Activated CD4-positive, alpha-beta T cell treated with anti-CD3 and anti-CD28 coated beads, Interleukin-2, amount 10 ng/mL, durations not matched to agents 24 days and 14 days (primary cell): ENCODE measurements at regions of chr7 and their contacts with region 1.

Region 1: DNA sequence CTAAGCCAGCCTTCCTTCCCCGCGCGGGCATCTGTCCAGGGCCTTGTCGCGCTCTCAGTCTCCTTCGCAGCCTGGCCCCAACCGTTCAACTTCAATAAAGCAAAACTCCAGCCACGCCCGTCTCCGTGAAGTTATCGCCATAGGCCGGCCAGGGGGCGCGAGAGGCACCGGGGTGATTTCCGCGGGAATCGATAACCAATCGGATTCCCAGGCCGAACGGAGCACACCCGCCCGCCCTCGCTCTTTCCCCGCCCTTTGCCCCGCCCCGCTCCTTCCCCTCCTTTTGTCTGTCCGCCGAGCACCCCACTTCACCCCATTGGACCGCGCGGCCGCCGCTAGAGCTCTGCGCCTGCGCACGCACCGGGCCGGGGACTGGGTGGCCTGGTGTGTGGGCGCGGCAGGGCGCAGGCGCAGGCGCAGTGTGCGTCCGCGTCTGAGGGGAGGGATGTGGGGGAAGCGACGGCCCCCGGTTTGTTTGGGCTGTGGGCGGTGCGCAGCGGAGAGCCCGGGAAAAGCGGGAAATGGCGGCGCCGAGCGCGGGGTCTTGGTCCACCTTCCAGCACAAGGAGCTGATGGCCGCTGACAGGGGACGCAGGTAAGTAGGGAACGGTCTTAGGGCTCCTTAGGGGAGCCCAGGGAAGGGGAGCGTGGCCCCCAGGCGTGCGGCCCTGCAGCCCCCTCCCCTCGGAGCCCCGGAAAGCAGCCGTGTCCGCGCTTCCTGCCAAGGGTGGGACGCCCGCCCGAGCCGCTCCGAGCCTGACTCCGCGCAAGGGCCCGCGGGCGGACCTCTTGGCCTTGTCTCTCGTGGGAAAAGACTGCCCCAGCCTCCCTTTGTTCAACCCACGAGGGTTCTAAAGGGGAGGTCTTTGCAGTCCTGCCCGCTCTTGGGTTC is at the start of gene CASP2:
- DNase-seq: peak; percentile 100
- H3K4me3 Mint-ChIP-seq: peak within 1 kb of the TSS; percentile 97
- H3K27ac Mint-ChIP-seq: peak within 1 kb of the TSS; percentile 95
- H3K4me1 Mint-ChIP-seq: peaks cover 54% of the 10 kb centered on the region
- H3K27me3 Mint-ChIP-seq: no peaks in the 10 kb centered on the region
- total RNA-seq, gene CASP2: 99.1 and 110 TPM in 2 replicates

Region 2: GRCh38 chr7:142587578-142588191 is 700.5 kb before region 1 on chr7:
- intact Hi-C with region 1: no loop called
- DNase-seq: peak; percentile 70
- H3K4me3 Mint-ChIP-seq: no peak overlapping the region
- H3K27ac Mint-ChIP-seq: no peak overlapping the region
- H3K4me1 Mint-ChIP-seq: peaks cover 14% of the 10 kb centered on the region
- H3K27me3 Mint-ChIP-seq: no peaks in the 10 kb centered on the region

Region 3: GRCh38 chr7:143205560-143206293 is 82.5 kb before region 1 on chr7:
- intact Hi-C with region 1: no loop called
- DNase-seq: peak; percentile 58
- H3K4me3 Mint-ChIP-seq: no peak overlapping the region
- H3K27ac Mint-ChIP-seq: no peak overlapping the region
- H3K4me1 Mint-ChIP-seq: peaks cover 8% of the 10 kb centered on the region
- H3K27me3 Mint-ChIP-seq: peaks cover 18% of the 10 kb centered on the region

Region 4: DNA sequence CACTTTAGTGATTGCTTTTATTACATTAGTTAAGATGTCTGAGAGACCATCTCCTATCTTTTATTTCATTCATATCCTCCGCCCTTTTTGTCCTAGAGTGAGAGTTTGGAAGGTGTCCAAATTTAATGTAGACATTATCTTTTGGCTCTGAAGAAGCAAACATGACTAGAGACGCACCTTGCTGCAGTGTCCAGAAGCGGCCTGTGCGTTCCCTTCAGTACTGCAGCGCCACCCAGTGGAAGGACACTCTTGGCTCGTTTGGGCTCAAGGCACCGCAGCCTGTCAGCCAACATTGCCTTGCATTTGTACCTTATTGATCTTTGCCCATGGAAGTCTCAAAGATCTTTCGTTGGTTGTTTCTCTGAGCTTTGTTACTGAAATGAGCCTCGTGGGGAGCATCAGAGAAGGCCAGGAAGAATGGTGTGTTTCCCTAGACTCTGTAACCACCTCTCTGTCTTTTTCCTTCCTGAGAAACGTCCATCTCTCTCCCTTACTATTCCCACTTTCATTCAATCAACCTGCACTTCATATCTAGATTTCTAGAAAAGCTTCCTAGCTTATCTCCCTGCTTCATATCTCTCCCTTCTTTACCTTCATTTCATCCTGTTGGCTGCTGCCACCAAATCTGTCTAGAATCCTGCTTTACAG is 17.4 kb after region 1 on chr7:
- intact Hi-C with region 1: loop called (anchors 2 kb)
- DNase-seq: peak; percentile 90
- H3K4me3 Mint-ChIP-seq: no peak overlapping the region
- H3K27ac Mint-ChIP-seq: peak overlapping the region; percentile 39
- H3K4me1 Mint-ChIP-seq: peaks cover 64% of the 10 kb centered on the region
- H3K27me3 Mint-ChIP-seq: no peaks in the 10 kb centered on the region

Region 5: DNA sequence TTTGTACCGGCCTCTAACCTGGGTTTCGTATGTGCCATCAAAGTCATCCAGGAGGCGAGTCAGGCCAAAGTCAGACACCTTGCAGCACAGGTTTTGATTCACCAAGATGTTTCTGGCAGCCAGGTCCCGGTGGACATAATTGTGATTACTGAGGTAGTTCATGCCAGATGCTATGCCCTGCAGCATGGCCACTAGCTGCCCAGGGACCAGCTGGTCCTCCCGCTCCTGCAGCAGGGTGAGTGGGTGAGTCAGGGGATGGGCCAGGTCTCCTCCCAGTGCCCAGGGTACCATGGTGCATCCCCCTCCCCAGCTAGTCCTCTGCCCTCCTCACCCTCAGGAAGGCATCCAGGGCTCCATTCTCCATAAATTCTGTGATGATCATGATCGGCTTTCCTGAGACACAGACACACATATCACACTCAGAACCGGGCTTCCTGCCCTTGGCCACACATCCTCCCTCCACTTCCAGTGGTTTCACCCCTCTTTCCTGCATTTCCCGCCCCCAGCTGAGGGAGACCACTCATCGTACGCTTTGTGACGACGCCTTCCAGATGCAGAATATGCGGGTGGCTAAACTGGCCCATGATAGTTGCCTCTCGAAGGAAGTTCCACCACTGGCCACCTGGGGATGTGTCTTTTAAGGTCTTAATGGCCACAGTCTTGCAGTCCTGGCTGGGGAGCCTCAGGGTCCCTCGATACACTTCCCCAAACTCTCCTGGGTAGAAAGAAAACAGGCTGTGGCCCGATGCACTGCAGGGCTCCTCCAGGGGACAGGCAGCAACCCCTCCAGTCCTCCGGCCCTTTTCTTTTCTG is 106.8 kb after region 1 on chr7:
- intact Hi-C with region 1: no loop called
- DNase-seq: no peak
- H3K4me3 Mint-ChIP-seq: no peak overlapping the region
- H3K27ac Mint-ChIP-seq: no peak overlapping the region
- H3K4me1 Mint-ChIP-seq: peaks cover 8% of the 10 kb centered on the region
- H3K27me3 Mint-ChIP-seq: no peaks in the 10 kb centered on the region